CD14-positive monocyte (primary cell): ENCODE measurements at regions of chr9 and their contacts with region 1.

Region 1: DNA sequence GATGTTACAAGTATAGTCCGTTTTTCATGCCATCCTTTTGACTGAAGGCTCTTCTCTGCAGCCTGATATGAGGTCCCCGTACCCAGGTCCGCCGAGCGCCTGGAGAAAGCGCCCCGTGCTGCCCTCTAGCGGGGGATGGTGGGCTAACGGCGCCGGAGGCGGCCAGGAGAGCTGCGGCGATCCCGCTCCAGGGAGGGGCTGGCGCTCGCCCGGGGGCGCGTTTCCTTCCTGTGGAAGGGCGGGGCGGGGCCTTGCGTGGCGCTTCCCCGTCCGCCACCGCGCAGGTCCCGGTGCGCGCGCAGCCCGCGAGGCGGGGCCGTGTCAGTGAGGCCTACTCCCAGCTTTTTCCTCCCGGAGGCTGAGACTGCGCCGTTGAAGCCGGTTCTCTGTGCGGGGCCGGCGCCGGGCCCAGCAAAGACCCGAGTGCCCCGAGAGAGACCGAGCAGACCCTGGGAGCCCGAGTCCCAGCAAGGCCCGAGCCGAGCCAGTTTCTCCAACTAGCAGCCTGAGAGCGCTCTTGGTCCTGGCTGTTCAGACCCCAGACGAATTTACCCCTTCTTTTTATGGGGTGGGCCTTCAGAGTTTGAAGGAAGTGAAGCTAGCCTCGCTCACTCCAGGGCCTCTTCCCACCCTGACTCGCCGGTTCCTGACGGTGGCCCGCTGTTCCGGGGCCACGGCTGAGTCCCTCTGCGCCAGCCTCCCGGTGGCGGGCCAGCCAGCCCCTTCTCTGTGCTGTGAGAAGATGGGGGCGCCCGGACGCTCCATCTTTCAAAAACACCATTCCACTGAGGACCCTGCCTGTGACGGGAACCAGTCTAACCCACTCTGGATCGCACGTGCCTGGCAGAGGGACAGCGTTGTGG is 9.7 kb upstream of the PHF2 start:
- DNase-seq: peak; percentile 96
- H3K4me3 ChIP-seq: peak overlapping the region; percentile 59 to 75 (median 65)
- H3K4me3 Mint-ChIP-seq: peak overlapping the region; percentile 79 to 90
- H3K27ac ChIP-seq: peak overlapping the region; percentile 91 to 99
- H3K27ac Mint-ChIP-seq: peak overlapping the region; percentile 90 to 96 (median 96)
- H3K4me1 ChIP-seq: peaks cover 30 to 34% of the 10 kb centered on the region in 2 donors
- H3K4me1 Mint-ChIP-seq: peaks cover 29% of the 10 kb centered on the region
- H3K27me3 ChIP-seq: no peaks in the 10 kb centered on the region
- H3K27me3 Mint-ChIP-seq: peaks cover 0 to 2% (median 1%) of the 10 kb centered on the region in 3 donors
- CTCF ChIP-seq: peak; percentile 92

Region 2: DNA sequence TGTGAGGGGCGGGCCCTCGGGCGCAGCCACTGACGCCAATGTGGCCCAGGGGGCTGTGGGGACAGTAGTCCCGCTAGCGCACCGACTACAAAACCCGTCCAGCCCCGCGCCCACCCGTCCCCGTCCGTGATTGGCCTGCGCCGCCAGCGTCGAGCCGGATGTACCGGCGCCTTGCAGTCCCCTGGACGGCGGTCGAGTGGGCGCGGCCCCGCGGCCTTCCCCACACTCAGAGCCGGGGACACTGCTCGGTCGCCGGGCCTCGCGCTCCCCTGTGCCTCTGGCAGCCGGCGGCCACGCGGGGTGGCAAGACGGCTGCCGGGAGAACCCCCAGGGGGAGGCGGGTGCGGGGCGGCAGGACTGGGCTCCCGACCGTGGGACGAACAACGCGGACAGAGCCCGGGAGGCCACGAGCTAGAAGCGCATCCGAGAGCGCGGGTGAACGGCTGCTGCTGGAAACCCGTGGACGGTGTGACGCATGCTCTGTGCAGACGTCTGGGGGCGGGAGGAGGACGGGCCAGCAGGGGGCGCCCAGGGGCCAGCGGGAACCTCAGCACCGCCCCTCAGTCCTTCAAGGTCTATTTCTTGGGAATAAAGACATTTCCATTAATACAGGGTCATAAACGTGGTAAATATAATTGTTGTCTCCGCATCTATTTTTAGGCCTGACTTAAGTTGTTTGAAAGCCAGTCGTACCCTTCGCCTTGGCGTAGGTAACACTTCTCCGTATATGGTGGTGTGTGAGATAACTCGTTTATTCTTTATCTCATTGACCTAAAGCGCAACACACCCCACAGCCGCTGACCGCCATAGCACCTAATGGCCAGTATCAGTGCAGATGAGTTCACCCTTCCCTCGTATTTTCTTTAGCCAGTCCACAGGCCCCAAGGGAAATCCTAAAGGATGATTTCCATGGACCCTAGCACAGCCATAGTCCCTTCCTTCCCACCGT is 801.4 kb before region 1 on chr9:
- intact Hi-C with region 1: loop called in 1 of 2 experiments (anchors 10 kb)
- DNase-seq: peak; percentile 93 to 97 (median 96)
- H3K4me3 ChIP-seq: peak overlapping the region; percentile 63 to 77 (median 73)
- H3K4me3 Mint-ChIP-seq: peak overlapping the region; percentile 91 to 92
- H3K27ac ChIP-seq: peak overlapping the region; percentile 93 to 94
- H3K27ac Mint-ChIP-seq: peak overlapping the region; percentile 91 to 98 (median 97)
- H3K4me1 ChIP-seq: peaks cover 61% of the 10 kb centered on the region in 2 donors
- H3K4me1 Mint-ChIP-seq: peaks cover 63% of the 10 kb centered on the region
- H3K27me3 ChIP-seq: no peaks in the 10 kb centered on the region
- H3K27me3 Mint-ChIP-seq: peaks cover 0 to 4% (median 0%) of the 10 kb centered on the region in 3 donors
- CTCF ChIP-seq: peak; percentile 99

Region 3: GRCh38 chr9:93134015-93134739 is 432.5 kb before region 1 on chr9 and contains the start of gene NINJ1:
- intact Hi-C with region 1: loop called in 1 of 2 experiments (anchors 10 kb)
- DNase-seq: peak; percentile 93 to 98 (median 94)
- H3K4me3 ChIP-seq: peak within 1 kb of the TSS; percentile 83 to 89 (median 88)
- H3K4me3 Mint-ChIP-seq: peak within 1 kb of the TSS; percentile 92 to 94
- H3K27ac ChIP-seq: peak within 1 kb of the TSS; percentile 86 to 95
- H3K27ac Mint-ChIP-seq: peak within 1 kb of the TSS; percentile 94 to 98 (median 96)
- H3K4me1 ChIP-seq: peaks cover 64% of the 10 kb centered on the region in 2 donors
- H3K4me1 Mint-ChIP-seq: peaks cover 71% of the 10 kb centered on the region
- H3K27me3 ChIP-seq: no peaks in the 10 kb centered on the region
- H3K27me3 Mint-ChIP-seq: peaks cover 6 to 20% (median 12%) of the 10 kb centered on the region in 3 donors
- CTCF ChIP-seq: no peak
- polyA plus RNA-seq, gene NINJ1: 290 to 610 (median 469) TPM

Region 4: DNA sequence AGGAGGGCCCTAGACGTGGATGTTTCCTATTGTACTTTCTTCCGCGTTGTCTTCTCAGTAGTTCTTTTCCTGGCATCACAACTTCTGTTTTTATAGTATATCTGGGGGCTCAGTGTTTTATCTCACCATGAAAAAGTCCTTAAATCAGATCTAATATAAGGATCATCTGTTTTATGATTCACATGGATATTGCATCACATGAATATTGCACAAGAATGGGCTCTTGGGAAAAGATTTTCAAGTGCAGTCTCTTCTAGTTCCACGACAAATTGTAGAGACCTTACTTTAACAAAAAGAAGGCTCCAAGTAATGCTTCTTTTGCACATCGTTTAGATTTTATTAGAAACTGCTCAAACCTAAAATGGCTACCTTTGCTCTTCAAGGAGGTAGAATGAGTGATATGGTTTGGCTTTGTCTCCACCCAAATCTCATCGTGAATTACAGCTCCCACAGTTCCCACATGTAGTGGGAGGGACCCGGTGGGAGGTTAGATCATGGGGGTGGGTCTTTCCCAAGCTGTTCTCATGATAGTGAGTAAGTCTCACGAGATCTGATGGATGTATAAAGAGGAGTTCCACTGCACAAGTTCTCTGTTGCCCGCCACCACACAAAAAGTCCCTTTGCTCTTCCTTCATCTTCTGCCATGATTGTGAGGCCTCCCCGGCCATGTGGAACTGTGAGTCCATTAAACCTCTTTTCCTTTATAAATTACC is 168.8 kb before region 1 on chr9:
- intact Hi-C with region 1: no loop called
- DNase-seq: peak; percentile 18 to 73 (median 49)
- H3K4me3 ChIP-seq: no peak overlapping the region
- H3K4me3 Mint-ChIP-seq: no peak overlapping the region
- H3K27ac ChIP-seq: no peak overlapping the region
- H3K27ac Mint-ChIP-seq: peak overlapping the region in 2 of 7 donors; percentile 13 to 45
- H3K4me1 ChIP-seq: peaks cover 7 to 11% of the 10 kb centered on the region in 2 donors
- H3K4me1 Mint-ChIP-seq: peaks cover 15% of the 10 kb centered on the region
- H3K27me3 ChIP-seq: no peaks in the 10 kb centered on the region
- H3K27me3 Mint-ChIP-seq: peaks cover 1 to 5% (median 3%) of the 10 kb centered on the region in 3 donors
- CTCF ChIP-seq: no peak

Region 5: GRCh38 chr9:93501406-93501805 is 65.2 kb before region 1 on chr9:
- intact Hi-C with region 1: loop called (anchors 5 kb)
- DNase-seq: no peak
- H3K4me3 ChIP-seq: peak overlapping the region in 2 of 3 experiments; percentile 25 to 61
- H3K4me3 Mint-ChIP-seq: peak overlapping the region; percentile 69 to 82
- H3K27ac ChIP-seq: peak overlapping the region in 1 of 2 donors; percentile 72
- H3K27ac Mint-ChIP-seq: peak overlapping the region; percentile 86 to 99 (median 87)
- H3K4me1 ChIP-seq: peaks cover 50 to 63% of the 10 kb centered on the region in 2 donors
- H3K4me1 Mint-ChIP-seq: peaks cover 65% of the 10 kb centered on the region
- H3K27me3 ChIP-seq: no peaks in the 10 kb centered on the region
- H3K27me3 Mint-ChIP-seq: no peaks in the 10 kb centered on the region
- CTCF ChIP-seq: no peak

Region 6: DNA sequence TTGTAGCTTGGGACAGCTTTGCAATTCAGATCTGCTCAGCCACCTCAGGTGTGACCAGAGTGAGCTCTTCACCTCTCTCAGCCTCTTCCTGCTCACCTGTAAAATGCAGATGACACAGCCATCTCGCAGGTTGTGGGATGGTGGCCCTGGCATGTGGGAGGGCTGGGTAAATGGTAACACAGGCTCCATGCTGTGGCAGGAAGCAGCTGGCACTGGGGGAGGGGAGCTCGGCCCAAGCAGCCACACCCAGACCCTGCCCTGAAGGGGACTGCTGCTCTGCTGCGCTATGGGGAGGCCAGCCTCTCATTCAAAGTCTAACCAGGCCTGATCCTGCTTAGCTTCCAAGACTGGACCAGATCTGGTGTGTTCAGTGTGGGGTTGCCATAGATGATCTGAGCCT is 33.9 kb after region 1 on chr9:
- intact Hi-C with region 1: no loop called
- DNase-seq: no peak
- H3K4me3 ChIP-seq: no peak overlapping the region
- H3K4me3 Mint-ChIP-seq: no peak overlapping the region
- H3K27ac ChIP-seq: no peak overlapping the region
- H3K27ac Mint-ChIP-seq: peak overlapping the region in 2 of 7 donors; percentile 17 to 46
- H3K4me1 ChIP-seq: peaks cover 8 to 10% of the 10 kb centered on the region in 2 donors
- H3K4me1 Mint-ChIP-seq: peaks cover 28% of the 10 kb centered on the region
- H3K27me3 ChIP-seq: no peaks in the 10 kb centered on the region
- H3K27me3 Mint-ChIP-seq: no peaks in the 10 kb centered on the region
- CTCF ChIP-seq: no peak